Posterior vena cava (tissue), 2 donors: ENCODE measurements at regions of chr6 and their contacts with region 1.

Region 1: GRCh38 chr6:108896111-108896661 is 48.0 kb downstream of the ARMC2 start:
- DNase-seq: no peak

Region 2: GRCh38 chr6:108866798-108867197 is 29.4 kb before region 1 on chr6:
- intact Hi-C with region 1: loop called in 1 of 2 experiments (anchors 1 kb)
- DNase-seq: no peak

Region 3: DNA sequence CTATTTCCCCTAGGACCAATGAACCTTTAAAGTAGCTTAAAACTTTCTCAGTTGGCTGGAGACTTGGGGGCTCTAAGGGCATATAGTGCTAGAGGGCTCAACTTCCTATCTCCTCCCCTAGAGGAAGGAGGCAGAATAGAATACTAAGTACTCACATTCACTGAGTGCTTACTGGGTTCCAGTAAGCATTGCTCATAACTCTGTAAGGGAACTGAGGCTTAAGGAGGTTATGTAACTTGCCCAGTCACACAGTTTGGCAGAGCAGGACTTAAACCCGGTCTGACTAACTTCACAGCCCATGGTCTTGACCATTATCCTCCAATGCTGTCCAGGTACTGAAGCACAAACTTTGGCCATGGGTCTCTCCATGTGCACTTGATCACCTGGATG is 186.0 kb after region 1 on chr6:
- intact Hi-C with region 1: no loop called
- DNase-seq: no peak

Region 4: GRCh38 chr6:109397020-109397419 is 500.8 kb after region 1 on chr6:
- intact Hi-C with region 1: no loop called
- DNase-seq: no peak